Cardiac septum (tissue), 1 donor: ENCODE measurements at regions of chr2 and their contacts with region 1.

Region 1: DNA sequence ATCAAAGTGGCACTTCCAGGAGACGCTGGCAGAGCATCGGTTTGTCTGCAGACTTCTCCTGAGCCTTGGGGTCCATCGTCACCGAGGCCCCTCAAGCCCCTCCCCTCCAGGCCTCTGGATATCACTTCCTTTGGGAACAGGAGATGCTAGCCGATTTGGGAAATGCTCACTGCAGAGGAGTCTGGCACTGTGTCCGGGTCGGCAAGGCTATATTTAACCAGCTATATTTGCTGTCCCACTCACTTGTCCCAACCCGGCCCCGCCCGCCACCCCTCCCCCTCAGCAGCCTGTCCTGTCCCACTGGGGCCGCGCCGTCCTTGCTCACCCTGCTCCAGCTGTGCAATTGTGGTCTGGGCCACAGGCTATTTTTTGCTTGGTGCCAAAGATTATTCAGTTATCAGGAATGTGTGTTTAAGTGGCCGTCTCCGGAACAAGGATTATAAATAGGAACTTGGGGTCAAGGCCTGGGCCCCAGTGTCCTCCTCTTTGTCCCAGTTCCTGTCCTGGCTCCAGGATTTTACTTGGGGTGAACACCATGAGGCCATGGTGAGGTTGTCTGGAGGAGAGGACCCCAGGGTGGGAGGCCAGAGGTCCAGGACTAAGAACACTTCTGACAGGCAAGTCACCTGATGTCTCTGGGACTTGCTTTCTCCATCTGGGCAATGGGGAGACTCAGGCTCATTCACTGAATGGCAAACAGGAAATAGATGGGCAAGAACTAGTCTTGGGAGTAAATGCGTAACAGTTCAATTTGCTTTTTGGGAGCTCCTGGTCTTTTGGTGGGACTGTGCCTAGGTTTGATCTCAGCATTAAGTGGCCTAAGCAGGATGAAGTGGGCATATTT is 263.6 kb downstream of the DYSF start:
- DNase-seq: peak; percentile 95

Region 2: DNA sequence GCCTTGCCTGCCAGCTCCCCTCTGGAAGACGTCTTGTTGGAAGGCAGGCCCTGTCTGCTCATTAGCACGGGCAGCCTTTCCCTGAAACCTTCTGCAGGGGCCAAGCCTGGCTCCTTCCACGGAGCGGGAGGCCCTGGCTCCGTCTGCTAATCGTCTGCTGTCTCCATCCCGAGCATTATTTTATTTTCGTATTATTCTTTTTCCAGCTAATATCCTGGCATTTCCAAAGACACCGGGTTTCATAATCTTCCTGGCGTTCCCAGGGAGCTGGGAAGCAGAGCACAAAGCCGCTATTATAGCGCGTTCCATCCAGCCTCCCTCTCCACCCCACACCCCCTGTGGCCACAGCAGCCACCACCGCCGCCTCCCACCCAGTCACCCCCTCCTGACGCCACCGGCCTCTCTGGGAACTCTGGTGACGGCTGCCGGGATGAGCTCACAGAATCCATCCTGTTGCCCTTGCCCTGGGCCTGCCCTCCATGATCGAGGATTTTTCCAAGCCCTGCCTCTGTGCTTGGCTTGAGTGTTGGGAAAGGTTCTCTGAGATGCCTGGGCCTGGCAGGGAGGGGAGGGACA is 138.1 kb before region 1 on chr2:
- intact Hi-C with region 1: no loop called
- DNase-seq: peak; percentile 83

Region 3: DNA sequence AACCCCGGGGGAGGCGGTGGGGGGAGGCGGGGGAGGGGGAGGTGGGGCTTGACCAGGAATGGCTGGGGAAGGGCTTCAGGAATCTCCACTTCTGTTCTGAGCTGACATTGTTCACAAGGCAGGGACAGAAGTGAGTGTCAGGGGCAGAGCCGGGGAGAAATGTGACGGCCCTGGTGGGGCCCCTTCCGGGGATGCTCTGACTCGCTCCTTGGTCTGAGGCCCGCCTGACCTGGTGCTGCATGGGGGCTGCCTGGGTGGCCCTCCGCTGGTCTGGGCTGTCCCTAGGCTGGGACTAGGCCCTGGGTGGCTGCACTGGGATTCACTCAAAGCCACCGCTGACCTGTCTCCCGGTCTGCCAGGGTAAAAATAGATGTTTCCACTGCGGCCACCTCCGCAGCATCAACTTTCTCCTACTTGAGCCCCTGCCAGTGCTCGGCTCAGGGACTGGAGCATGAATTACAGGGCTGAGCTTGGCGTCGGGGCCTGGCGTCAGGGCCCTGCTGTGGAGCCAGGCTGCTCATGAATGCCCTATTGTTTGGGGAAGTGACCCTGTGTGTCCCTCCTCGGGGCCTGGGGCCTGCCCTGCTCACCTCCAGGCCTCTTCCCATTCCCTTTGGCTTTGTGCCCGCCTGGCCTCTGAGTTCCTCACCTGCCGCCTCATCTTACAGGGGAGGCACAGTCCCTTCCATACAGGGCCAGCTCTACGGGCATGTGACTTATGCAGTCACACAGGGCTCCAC is 16.2 kb before region 1 on chr2:
- intact Hi-C with region 1: loop called (anchors 1 kb)
- DNase-seq: peak; percentile 90

Region 4: GRCh38 chr2:71742953-71743601 is 26.1 kb after region 1 on chr2:
- intact Hi-C with region 1: loop called (anchors 2 kb)
- DNase-seq: no peak

Region 5: DNA sequence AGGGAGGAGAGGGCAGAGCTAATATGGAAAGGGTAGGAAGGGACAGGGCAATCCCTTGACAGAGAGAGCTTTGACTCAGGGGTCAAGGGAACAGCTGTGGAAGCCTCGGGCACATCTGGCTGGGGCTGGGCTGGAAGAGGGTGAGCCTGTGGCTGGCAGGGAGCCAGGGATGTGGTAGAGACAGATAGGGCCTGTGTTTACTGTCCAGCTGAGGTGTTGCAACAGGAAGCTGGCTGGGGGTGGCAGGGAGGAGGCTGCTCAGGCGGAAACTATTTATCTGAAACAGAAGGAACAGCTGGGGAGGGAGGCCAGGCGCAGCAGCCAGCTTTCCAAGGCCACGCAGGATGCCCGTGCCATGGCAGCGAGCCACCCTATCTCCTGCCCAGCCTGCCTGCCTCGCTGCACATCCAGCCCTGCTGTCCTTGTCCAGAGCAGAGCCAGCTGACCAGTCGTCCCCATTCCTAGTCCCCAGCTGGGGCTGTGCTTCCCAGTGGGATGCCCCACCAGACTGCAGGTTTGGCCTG is 166.0 kb after region 1 on chr2:
- intact Hi-C with region 1: loop called (anchors 2 kb)
- DNase-seq: peak; percentile 91

Region 6: GRCh38 chr2:72041638-72042111 is 324.7 kb after region 1 on chr2:
- intact Hi-C with region 1: no loop called
- DNase-seq: no peak